ENCODE measurements at regions of chr2 and their contacts with region 1.

Region 1: DNA sequence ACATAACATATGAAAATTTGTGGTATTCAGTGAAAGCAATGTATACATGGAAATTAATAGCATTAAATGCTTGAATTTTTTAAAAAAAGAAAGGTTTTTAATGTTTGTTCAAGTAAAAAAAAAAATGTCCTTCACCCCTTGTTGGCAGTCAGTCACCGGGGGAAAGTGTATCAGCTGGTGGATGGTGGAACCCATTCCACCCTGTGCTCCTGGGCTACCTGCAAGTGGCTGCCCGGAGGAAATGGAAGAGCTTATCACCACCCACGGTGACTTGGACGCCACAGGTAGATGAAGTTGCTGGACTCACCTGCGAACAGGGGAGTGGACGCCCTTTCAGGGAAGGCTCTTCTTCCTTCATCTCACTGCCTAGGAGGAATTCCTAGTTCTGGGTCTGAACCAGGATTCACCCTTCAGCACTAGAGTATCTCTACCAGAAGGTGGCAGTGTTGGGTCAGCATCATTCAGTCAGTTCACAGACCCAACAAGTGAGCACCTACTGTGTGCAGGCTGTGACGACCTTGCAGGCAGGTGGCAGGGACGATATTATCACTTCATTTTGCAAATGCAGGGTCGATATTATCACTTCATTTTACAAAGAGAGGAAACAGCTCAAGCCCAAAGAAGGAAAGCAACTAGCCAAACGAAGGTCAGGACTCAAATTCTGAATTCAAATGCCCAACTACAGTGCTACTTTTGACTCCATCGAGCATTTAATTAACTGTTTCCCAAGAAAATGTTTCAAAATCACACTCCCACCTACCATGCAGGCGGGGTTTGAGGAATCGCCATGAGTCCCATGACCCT is 35.8 kb downstream of the CIB4 start:
- DNase-seq: peak; percentile 63
- H3K4me3 ChIP-seq: no peak overlapping the region
- H3K27ac ChIP-seq: no peak overlapping the region
- H3K4me1 ChIP-seq: peaks cover 7% of the 10 kb centered on the region
- CTCF ChIP-seq: peak; percentile 93

Region 2: GRCh38 chr2:26623541-26624396 is 18.4 kb after region 1 on chr2:
- CTCF ChIA-PET with region 1: no interaction called
- POLR2A ChIA-PET with region 1: no interaction called
- intact Hi-C with region 1: no loop called
- DNase-seq: no peak
- H3K4me3 ChIP-seq: no peak overlapping the region
- H3K27ac ChIP-seq: no peak overlapping the region
- H3K4me1 ChIP-seq: no peaks in the 10 kb centered on the region
- CTCF ChIP-seq: no peak

Region 3: DNA sequence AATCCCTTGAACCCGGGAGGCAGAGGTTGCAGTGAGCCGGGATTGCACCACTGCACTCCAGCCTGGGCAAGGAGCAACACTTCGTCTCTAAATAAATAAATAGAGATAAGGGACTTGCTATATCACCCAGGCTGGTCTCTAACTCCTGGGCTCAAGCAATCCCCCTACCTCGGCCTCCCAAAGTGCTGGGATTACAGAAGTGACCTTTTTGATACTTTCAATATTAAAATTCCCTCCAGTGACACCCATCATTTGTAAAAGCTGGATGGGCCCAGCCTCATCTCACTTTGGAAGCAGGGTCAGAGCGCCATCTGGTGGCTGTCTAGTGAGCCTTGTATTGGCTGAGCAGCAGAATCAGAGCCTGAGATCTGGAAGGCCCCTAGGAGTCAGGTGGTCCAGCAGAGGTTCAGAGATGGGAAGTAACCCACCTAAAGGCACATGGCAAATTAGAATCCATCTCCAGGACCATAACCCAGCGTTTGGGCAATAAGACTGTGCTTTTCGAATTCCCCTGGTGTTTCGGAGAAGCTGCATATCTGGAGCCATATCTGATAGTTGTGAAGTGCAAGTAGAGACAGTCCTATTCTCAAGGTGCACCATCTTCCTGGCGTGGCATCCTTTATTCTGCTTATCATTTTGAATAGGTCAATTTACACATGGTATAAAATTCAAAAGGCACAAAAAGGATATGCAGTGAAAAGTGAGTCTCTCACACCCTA is 140.4 kb after region 1 on chr2:
- CTCF ChIA-PET with region 1: no interaction called
- POLR2A ChIA-PET with region 1: no interaction called
- intact Hi-C with region 1: loop called (anchors 1 kb)
- DNase-seq: peak; percentile 86
- H3K4me3 ChIP-seq: no peak overlapping the region
- H3K27ac ChIP-seq: no peak overlapping the region
- H3K4me1 ChIP-seq: peaks cover 13% of the 10 kb centered on the region
- CTCF ChIP-seq: peak; percentile 96

Measured in OCI-LY7 (cell line).